ENCODE measurements at regions of chr21 and their contacts with region 1.

Region 1: DNA sequence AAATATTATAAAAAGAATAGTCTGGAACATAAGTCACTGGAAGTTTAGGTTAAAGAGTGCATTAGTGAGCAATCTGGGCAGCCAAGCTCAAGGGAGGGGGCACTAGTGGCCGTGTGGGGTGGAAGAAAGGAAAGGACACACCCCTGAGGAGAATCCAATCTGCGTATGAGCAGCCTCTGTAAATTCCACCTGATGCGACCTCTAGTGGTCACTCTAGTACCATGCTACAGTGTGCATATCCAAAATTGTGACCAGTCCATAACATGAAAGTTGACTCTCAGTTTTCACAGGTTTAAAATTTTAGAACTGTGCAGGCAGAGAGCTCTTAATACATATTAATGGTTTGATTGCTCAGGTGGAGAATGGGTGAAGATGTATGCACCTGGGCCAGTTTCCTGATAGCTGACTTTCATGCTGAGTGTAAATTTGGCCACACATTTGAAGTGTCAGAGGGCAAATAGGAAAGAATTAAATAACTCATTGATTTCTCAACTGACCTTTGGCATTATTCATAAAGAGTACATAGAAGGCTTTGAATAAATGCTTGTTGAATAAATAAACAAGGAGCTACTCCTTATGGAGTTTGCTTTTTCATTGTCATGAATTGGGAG is 105.9 kb upstream of the C21orf91 start:
- DNase-seq: peak; percentile 33
- ATAC-seq: peak; percentile 100
- H3K4me3 ChIP-seq: no peak overlapping the region
- H3K27ac ChIP-seq: no peak overlapping the region
- H3K4me1 ChIP-seq: no peaks in the 10 kb centered on the region
- H3K27me3 ChIP-seq: no peaks in the 10 kb centered on the region
- CTCF ChIP-seq: peak; percentile 82 to 91 (median 87)
- EP300 ChIP-seq: no peak
- POLR2A ChIP-seq: no peak
- RAD21 ChIP-seq: peak; percentile 76

Region 2: GRCh38 chr21:17387030-17387617 is 538.0 kb before region 1 on chr21:
- CTCF ChIA-PET with region 1: interaction called, 8 read pairs
- POLR2A ChIA-PET with region 1: no interaction called
- RAD21 ChIA-PET with region 1: no interaction called
- SMC1A ChIA-PET with region 1: interaction called, 4 read pairs
- in situ Hi-C with region 1: no loop called
- intact Hi-C with region 1: loop called (anchors 10 kb)
- DNase-seq: peak; percentile 1
- ATAC-seq: peak; percentile 74
- H3K4me3 ChIP-seq: no peak overlapping the region
- H3K27ac ChIP-seq: no peak overlapping the region
- H3K4me1 ChIP-seq: no peaks in the 10 kb centered on the region
- H3K27me3 ChIP-seq: no peaks in the 10 kb centered on the region
- CTCF ChIP-seq: peak; percentile 46 to 71 (median 54)
- EP300 ChIP-seq: no peak
- POLR2A ChIP-seq: no peak
- RAD21 ChIP-seq: peak; percentile 83

Region 3: DNA sequence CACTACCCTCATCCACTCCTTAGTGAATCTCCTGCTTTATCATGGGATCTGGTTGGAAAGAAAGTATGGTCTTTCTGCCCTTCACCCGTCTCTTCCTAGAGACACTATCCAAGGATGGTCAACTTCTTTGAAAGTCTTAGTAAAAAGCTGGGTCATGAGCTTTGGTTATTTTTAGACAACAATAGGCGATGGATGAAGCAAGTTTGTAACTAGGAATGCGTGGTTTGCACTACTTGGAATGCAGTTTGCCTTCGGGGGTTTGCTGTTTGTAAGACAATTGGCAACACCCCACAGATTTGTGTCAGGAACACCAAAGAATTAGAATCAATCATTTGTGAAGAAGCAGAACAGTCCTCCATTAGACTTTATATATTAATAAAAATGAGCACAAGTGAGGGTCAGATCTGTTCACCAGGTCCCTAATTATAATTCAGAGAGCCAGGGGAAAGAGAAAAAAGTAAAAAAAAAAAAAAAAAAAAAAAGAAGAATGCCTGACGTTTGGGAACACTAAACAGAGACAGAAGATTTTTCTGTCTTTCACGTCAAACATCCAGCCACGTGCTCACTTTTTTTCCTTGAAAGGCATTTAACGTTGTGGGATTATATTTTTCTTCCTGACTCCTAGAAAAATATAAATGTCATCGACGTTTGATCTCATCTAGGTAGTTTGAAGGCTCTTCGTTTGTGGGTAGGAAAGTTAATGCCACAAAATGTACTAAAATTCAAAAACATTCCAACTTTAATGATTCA is 251.7 kb before region 1 on chr21:
- CTCF ChIA-PET with region 1: interaction called, 27 read pairs
- POLR2A ChIA-PET with region 1: interaction called, 6 read pairs
- RAD21 ChIA-PET with region 1: no interaction called
- SMC1A ChIA-PET with region 1: interaction called, 18 read pairs
- in situ Hi-C with region 1: no loop called
- intact Hi-C with region 1: no loop called
- DNase-seq: no peak
- ATAC-seq: no peak
- H3K4me3 ChIP-seq: no peak overlapping the region
- H3K27ac ChIP-seq: no peak overlapping the region
- H3K4me1 ChIP-seq: no peaks in the 10 kb centered on the region
- H3K27me3 ChIP-seq: no peaks in the 10 kb centered on the region; a peak in 1 of 4 replicates
- CTCF ChIP-seq: no peak
- EP300 ChIP-seq: no peak
- POLR2A ChIP-seq: no peak
- RAD21 ChIP-seq: no peak

Region 4: GRCh38 chr21:17688912-17689874 is 235.9 kb before region 1 on chr21:
- CTCF ChIA-PET with region 1: interaction called, 39 read pairs
- POLR2A ChIA-PET with region 1: no interaction called
- RAD21 ChIA-PET with region 1: interaction called, 4 read pairs
- SMC1A ChIA-PET with region 1: interaction called, 13 read pairs
- in situ Hi-C with region 1: no loop called
- intact Hi-C with region 1: no loop called
- DNase-seq: no peak
- ATAC-seq: no peak; the same call in 2 of the 3 replicates
- H3K4me3 ChIP-seq: no peak overlapping the region
- H3K27ac ChIP-seq: no peak overlapping the region
- H3K4me1 ChIP-seq: peaks cover 3% of the 10 kb centered on the region
- H3K27me3 ChIP-seq: no peaks in the 10 kb centered on the region
- CTCF ChIP-seq: peak; percentile 17 to 50 (median 23); a peak in 4 of 6 replicates
- EP300 ChIP-seq: no peak
- POLR2A ChIP-seq: no peak
- RAD21 ChIP-seq: peak; percentile 57

Region 5: DNA sequence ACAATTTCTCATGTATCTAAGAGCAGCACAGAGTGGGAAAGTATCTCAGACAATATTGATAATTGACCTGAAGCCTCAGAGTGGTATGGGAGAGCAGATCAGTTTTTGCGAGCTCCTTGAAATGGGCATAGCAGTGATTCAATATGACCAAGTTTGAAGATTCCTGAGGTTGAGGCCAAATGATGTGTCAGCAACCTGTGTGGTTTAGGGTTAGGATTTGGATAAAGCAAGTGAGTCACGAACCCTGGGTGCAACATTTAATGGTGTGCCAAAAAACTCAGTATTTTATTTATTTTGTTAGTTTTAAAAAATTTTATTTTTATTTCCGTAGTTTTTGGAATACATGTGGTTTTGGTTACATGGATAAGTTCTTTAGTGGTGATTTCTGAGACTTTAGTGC is 13.5 kb before region 1 on chr21:
- CTCF ChIA-PET with region 1: interaction called, 17 read pairs
- POLR2A ChIA-PET with region 1: no interaction called
- RAD21 ChIA-PET with region 1: interaction called, 3 read pairs
- SMC1A ChIA-PET with region 1: interaction called, 4 read pairs
- in situ Hi-C with region 1: no loop called
- intact Hi-C with region 1: no loop called
- DNase-seq: no peak
- ATAC-seq: no peak
- H3K4me3 ChIP-seq: no peak overlapping the region
- H3K27ac ChIP-seq: no peak overlapping the region
- H3K4me1 ChIP-seq: no peaks in the 10 kb centered on the region
- H3K27me3 ChIP-seq: no peaks in the 10 kb centered on the region
- CTCF ChIP-seq: no peak
- EP300 ChIP-seq: no peak
- POLR2A ChIP-seq: no peak
- RAD21 ChIP-seq: no peak

Region 6: GRCh38 chr21:18049461-18049860 is 124.4 kb after region 1 on chr21:
- CTCF ChIA-PET with region 1: no interaction called
- POLR2A ChIA-PET with region 1: no interaction called
- RAD21 ChIA-PET with region 1: no interaction called
- SMC1A ChIA-PET with region 1: no interaction called
- in situ Hi-C with region 1: no loop called
- intact Hi-C with region 1: no loop called
- DNase-seq: no peak
- ATAC-seq: no peak
- H3K4me3 ChIP-seq: no peak overlapping the region
- H3K27ac ChIP-seq: no peak overlapping the region
- H3K4me1 ChIP-seq: no peaks in the 10 kb centered on the region
- H3K27me3 ChIP-seq: no peaks in the 10 kb centered on the region
- CTCF ChIP-seq: no peak
- EP300 ChIP-seq: no peak
- POLR2A ChIP-seq: no peak
- RAD21 ChIP-seq: no peak